Ascending aorta (tissue), 2 donors: ENCODE measurements at regions of chr9 and their contacts with region 1.

Region 1: DNA sequence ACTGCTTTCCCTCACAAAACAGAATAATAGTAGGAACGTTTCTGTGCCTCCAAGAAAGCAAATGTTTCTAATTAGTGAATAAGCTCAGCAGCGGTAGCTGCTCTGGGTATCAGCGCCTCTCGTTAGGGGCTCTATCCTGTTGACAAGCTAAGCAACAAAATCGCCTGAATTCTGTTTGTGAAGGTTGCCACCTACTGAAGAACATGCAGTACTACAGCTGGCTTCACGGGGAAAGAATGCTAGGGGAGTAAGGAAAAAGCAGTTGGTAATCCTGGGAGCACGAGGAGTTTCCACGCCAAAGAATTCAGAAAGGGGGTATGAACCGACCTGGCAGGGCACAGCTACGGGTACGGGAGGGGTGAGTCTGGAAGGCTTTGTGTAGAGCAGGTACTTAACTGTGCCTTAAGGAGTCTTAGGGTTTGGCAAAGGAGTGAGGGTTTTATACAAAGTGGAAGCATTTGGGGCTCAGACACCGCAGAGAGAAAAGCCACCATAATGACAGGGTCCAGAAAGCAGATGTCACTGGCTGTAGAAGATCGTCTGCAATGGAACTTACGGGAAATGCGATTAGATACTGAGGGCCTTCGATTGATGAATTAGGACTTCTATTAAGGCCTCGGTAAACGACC is 171.7 kb downstream of the TTC39B start:
- DNase-seq: peak in 1 of 2 donors; percentile 81
- H3K4me3 ChIP-seq: peak overlapping the region; percentile 24 to 42
- H3K27ac ChIP-seq: no peak overlapping the region
- H3K4me1 ChIP-seq: peaks cover 0 to 8% of the 10 kb centered on the region in 2 donors
- H3K27me3 ChIP-seq: no peaks in the 10 kb centered on the region
- CTCF ChIP-seq: peak; percentile 78 to 96 (median 93)

Region 2: GRCh38 chr9:14813336-14814180 is 321.7 kb before region 1 on chr9:
- intact Hi-C with region 1: loop called (anchors 10 kb)
- DNase-seq: no peak
- H3K4me3 ChIP-seq: peak overlapping the region in 1 of 2 donors; percentile 18
- H3K27ac ChIP-seq: peak overlapping the region in 1 of 2 donors; percentile 34
- H3K4me1 ChIP-seq: no peaks in the 10 kb centered on the region
- H3K27me3 ChIP-seq: no peaks in the 10 kb centered on the region
- CTCF ChIP-seq: no peak